Activated CD4-positive, alpha-beta T cell treated with anti-CD3 and anti-CD28 coated beads for 36 hours (primary cell): ENCODE measurements at regions of chrX and their contacts with region 1.

Region 1: GRCh38 chrX:100819837-100820666 is at the start of gene CSTF2:
- DNase-seq: peak; percentile 89
- ATAC-seq: peak; percentile 98
- H3K4me3 Mint-ChIP-seq: peak within 1 kb of the TSS; percentile 93
- H3K27ac Mint-ChIP-seq: peak within 1 kb of the TSS; percentile 99
- H3K4me1 Mint-ChIP-seq: peaks cover 8% of the 10 kb centered on the region
- H3K27me3 Mint-ChIP-seq: peaks cover 2% of the 10 kb centered on the region
- total RNA-seq, gene CSTF2: 53.8 to 54.3 TPM

Region 2: DNA sequence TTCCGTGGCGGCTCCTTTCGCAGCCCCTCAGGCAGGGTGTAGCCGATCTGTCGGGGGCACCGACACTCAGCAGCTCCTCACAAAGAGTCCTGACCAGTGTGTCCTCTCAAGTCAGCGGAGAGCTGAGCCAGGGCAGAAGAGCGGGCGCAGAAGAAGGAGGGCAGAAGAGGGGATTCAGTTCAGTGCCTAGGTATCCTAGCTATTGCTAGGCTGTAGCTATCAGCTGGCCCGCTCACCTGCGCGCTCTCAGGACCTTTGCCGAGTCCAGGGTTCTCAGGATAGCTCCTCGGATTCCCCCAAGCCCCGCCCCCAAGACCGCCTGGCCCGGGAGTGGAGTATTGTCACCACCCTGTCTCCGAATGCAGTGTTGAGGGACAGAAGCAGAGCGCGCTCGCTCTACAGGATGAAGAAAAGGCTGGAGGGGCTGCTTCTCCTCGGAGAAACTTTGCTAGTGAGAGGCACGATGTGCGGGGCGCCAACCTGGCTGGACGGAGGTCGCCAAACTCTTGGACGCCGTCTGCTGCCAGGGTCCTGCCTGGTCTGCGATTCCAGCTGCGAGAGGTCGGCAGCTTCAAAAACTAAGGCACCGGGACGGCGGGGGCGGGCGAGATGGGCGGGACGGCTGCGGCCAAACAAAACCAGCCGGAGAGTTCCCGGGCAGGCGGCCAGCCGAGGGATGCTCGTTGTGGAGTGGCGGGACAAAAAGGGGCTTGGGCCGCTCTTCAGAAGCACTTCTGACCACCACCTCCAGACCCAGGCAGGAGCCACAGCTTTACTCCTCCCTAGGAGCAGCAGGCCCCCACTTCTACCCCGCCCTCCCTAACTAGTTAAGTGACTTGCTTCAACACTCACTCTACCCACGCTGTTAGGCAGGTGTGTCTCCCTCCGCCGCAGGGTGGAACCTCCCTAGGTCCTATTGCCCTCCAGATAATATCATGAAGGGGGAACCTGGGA is 108.9 kb after region 1 on chrX and contains the start of gene XKRX:
- CTCF ChIA-PET with region 1: no interaction called
- POLR2A ChIA-PET with region 1: no interaction called
- intact Hi-C with region 1: loop called in 1 of 2 experiments (anchors 2 kb)
- DNase-seq: peak; percentile 74
- ATAC-seq: peak; percentile 78
- H3K4me3 Mint-ChIP-seq: peak within 1 kb of the TSS; percentile 79
- H3K27ac Mint-ChIP-seq: peak within 1 kb of the TSS; percentile 75
- H3K4me1 Mint-ChIP-seq: peaks cover 53% of the 10 kb centered on the region
- H3K27me3 Mint-ChIP-seq: no peaks in the 10 kb centered on the region
- total RNA-seq, gene XKRX: 0.78 to 1.0 TPM

Region 3: DNA sequence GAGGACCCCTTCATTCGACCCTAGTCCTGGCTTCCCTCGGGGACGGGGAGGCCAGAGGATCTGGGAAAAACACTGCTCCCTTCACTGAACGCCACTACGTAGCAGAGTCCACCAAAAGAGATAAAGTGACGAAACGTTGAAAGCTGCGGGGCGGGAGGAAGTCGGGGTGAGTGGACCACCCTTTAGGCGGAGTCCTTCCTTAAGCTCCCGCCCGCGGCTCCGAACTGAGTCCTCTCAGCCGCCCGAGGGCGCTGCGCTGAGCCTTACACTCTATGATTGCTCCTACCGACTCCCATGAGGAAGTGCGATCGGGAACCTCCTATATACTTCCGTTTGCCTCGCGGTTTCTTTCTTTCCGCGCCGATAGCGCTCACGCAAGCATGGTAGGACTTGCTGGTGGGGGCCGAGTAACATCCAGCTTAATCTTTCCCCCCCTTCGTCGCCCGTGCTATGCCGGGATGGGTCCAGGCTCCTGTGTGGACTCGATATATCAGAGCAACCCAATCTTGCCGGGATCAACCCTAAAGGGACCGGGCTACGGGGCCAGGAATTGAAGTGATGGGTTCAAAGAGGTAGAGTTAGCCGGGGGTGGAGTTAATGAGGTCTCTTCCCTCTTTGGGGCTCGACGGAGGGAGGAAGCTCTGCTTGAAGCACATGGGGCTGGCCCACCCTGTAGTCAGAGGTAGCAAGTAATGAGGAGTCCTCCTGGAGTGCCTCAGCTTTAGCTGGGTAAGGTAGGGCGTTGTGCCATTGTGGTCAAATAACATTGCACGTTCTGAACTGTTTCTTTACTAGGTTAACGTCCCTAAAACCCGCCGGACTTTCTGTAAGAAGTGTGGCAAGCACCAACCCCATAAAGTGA is 570.8 kb after region 1 on chrX and contains the start of gene RPL36A:
- CTCF ChIA-PET with region 1: no interaction called
- POLR2A ChIA-PET with region 1: no interaction called
- intact Hi-C with region 1: loop called in 1 of 2 experiments (anchors 5 kb)
- DNase-seq: peak; percentile 90
- ATAC-seq: peak; percentile 97
- H3K4me3 Mint-ChIP-seq: peak within 1 kb of the TSS; percentile 95
- H3K27ac Mint-ChIP-seq: peak within 1 kb of the TSS; percentile 96
- H3K4me1 Mint-ChIP-seq: peaks cover 6% of the 10 kb centered on the region
- H3K27me3 Mint-ChIP-seq: peaks cover 3% of the 10 kb centered on the region
- total RNA-seq, gene RPL36A: 340 to 709 TPM